ENCODE measurements at regions of chrX and their contacts with region 1.

Region 1: GRCh38 chrX:5458300-5458842 is 770.3 kb downstream of the NLGN4X start:
- DNase-seq: no peak

Region 2: GRCh38 chrX:5086388-5086787 is 372.0 kb before region 1 on chrX:
- intact Hi-C with region 1: loop called in 1 of 2 experiments (anchors 5 kb)
- DNase-seq: no peak

Region 3: DNA sequence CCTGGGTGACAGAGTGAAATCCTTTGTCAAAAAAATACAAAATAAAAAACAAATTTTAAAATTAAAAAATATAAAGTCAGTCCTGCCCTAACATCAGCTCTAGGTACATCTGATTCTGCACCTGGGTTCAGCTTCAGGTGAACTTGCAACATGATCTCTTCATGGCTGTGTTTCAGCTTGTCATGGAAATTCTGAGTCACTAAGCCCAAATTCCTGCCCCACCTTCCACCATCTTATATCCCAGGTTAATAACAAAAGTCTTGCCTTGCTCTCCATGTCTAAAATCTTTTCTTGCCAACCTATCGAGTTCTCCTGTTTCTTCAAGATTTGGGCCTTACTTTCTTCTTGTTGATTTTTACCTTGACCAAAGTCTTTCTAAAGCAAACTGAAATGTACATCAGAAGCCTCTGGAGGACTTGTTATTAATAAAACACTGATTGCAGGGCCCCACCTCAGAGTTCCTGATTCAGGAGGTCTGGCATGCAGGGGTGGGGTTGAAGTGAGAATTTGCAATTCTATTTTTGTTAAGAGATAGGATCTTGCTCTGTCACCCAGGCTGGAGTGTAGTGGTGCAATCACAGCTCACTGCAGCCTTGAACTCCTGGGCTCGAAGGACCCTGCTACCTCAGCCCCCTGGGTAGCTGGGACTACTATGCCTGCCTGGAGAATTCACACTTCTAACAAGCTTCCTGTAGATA is 1202.3 kb after region 1 on chrX:
- intact Hi-C with region 1: no loop called
- DNase-seq: no peak